Mammary epithelial cell (primary cell): ENCODE measurements at regions of chr14 and their contacts with region 1.

Region 1: DNA sequence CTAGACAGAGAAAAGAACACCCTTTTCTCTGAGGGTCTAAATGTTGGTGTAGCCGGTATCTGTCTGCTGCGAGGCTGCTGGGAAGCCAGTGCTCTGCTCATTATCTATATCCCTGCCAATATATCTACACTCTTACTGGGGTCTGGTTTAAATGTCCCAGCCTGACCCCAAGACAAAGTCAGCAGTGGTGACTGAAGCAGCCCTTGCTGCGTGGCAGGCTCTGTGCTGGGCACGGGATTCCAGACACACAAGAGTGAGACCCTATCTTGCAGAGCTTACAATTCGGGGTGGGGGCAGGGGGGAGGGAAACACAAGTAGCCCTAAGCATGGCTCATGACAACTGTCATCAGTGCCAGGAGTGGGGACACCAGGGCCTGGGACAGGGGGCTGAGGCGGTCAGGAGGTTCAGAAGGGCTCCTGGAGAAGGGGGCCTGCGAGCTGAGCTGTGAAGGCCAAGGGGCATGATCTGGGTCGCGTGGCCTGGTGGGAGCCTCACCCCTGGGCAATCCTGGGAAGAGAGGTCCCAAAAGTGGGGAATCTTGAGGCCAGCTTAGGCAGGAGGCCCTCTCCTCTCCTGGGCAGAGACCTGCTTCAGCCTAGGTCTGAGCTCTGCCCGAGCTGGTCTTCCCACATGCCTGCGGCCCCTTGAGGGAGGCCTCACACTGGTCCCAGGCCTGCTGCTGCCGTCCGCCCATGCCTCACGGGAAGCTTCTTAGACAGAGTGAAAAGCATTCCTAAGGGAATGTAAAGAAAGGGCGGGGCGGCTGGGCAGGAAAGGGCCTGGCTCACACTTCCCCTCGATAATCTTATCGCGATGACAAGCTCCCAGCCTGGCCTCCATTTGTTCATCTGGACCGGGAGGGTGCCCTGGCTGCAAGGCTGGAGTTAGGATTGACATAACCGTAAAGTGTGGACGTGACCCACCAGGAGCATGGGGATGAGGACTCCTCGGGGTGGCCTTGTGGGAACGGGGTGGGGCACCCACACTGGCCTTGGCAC is 7.3 kb upstream of the RCOR1 start:
- DNase-seq: no peak
- H3K4me3 ChIP-seq: no peak overlapping the region
- H3K27ac ChIP-seq: no peak overlapping the region
- H3K4me1 ChIP-seq: peaks cover 14% of the 10 kb centered on the region
- H3K27me3 ChIP-seq: no peaks in the 10 kb centered on the region
- CTCF ChIP-seq: no peak

Region 2: GRCh38 chr14:102071283-102071998 is 513.7 kb before region 1 on chr14:
- CTCF ChIA-PET with region 1: no interaction called
- dilution Hi-C with region 1: no loop called
- in situ Hi-C with region 1: no loop called
- intact Hi-C with region 1: no loop called
- DNase-seq: peak; percentile 83
- H3K4me3 ChIP-seq: no peak overlapping the region
- H3K27ac ChIP-seq: peak overlapping the region; percentile 73
- H3K4me1 ChIP-seq: peaks cover 16% of the 10 kb centered on the region
- H3K27me3 ChIP-seq: no peaks in the 10 kb centered on the region
- CTCF ChIP-seq: no peak

Region 3: DNA sequence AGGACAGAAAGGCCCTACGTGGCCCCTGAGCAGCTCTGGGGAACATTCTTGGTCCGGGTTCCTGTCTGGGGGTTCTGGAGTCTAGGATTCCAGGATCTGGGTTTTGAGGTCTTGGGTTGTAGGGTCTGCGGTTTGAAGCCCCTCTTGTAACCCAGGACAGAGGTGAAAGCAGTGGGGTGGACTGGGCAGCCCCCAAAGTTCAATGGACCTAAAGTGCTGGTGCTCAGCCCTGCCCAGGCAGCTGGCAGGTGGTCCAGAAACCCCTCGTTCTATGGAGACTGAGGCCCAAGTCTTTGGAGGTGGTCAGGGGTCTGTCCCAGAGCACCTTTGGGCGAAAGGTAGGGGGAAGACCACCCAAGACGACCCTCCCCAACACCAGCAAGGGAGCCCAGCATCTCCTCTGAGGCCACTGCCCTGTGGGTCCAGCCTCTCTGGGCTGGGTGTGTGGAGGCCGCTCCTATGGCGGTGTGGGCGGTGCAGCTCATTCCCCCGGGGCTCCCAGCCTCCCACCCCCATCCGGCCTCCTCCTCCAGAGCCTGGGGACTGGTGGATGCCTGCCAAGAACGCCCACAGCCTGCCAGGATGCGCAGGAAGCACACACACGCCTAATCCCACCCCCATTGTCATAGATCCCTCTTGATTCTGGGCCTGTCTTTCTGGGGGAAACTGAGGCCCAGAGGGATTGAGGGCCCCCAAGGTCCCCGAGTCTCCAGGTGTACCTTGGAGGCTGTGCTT is 45.4 kb before region 1 on chr14:
- CTCF ChIA-PET with region 1: no interaction called
- dilution Hi-C with region 1: loop called (anchors 5 kb)
- in situ Hi-C with region 1: no loop called
- intact Hi-C with region 1: loop called (anchors 5 kb)
- DNase-seq: no peak
- H3K4me3 ChIP-seq: no peak overlapping the region
- H3K27ac ChIP-seq: no peak overlapping the region
- H3K4me1 ChIP-seq: peaks cover 27% of the 10 kb centered on the region
- H3K27me3 ChIP-seq: no peaks in the 10 kb centered on the region
- CTCF ChIP-seq: no peak